ENCODE measurements at regions of chr19 and their contacts with region 1.

Region 1: GRCh38 chr19:39412100-39412866 is at the start of gene PLEKHG2:
- DNase-seq: peak; percentile 98
- ATAC-seq: peak; percentile 57
- H3K4me3 ChIP-seq: peak within 1 kb of the TSS; percentile 70 to 97 (median 95)
- H3K27ac ChIP-seq: peak within 1 kb of the TSS; percentile 81
- H3K4me1 ChIP-seq: peaks cover 61% of the 10 kb centered on the region
- H3K27me3 ChIP-seq: no peaks in the 10 kb centered on the region; a peak in 1 of 5 replicates
- CTCF ChIP-seq: peak; percentile 89
- EP300 ChIP-seq: peak in 1 of 2 experiments; percentile 35; a peak in 2 of 4 replicates
- POLR2A ChIP-seq: peak; percentile 48 to 63; a peak in 3 of 4 replicates
- RAD21 ChIP-seq: peak; percentile 83
- total RNA-seq, gene PLEKHG2: 3.6 and 5.2 TPM in 2 replicates

Region 2: GRCh38 chr19:39125554-39126311 is 286.6 kb before region 1 on chr19 and contains the start of gene PAK4:
- CTCF ChIA-PET with region 1: no interaction called
- POLR2A ChIA-PET with region 1: no interaction called
- in situ Hi-C with region 1: no loop called
- intact Hi-C with region 1: loop called (anchors 5 kb)
- DNase-seq: peak; percentile 94
- ATAC-seq: peak; percentile 85
- H3K4me3 ChIP-seq: peak within 1 kb of the TSS; percentile 80 to 87 (median 85)
- H3K27ac ChIP-seq: peak within 1 kb of the TSS; percentile 99
- H3K4me1 ChIP-seq: peaks cover 59% of the 10 kb centered on the region
- H3K27me3 ChIP-seq: no peaks in the 10 kb centered on the region
- CTCF ChIP-seq: no peak; the same call in 1 of the 2 replicates
- EP300 ChIP-seq: no peak
- POLR2A ChIP-seq: peak; percentile 53 to 81; a peak in 2 of 4 replicates
- RAD21 ChIP-seq: no peak
- total RNA-seq, gene PAK4: 9.5 and 11.6 TPM in 2 replicates

Region 3: GRCh38 chr19:39390755-39391592 is 21.3 kb before region 1 on chr19 and contains the starts of genes MED29 and PAF1:
- CTCF ChIA-PET with region 1: interaction called, 127 read pairs
- POLR2A ChIA-PET with region 1: interaction called, 43 read pairs
- in situ Hi-C with region 1: no loop called
- intact Hi-C with region 1: no loop called
- DNase-seq: peak; percentile 99
- ATAC-seq: peak; percentile 96
- H3K4me3 ChIP-seq: peak within 1 kb of the TSS; percentile 92 to 96 (median 95)
- H3K27ac ChIP-seq: peak within 1 kb of the TSS; percentile 86
- H3K4me1 ChIP-seq: peaks cover 22% of the 10 kb centered on the region
- H3K27me3 ChIP-seq: no peaks in the 10 kb centered on the region
- CTCF ChIP-seq: peak; percentile 57
- EP300 ChIP-seq: no peak
- POLR2A ChIP-seq: peak; percentile 98
- RAD21 ChIP-seq: 0 out of 2 replicates have a peak, but pooled peaks have one; percentile 16
- total RNA-seq, gene MED29: 14.0 and 18.1 TPM in 2 replicates
- total RNA-seq, gene PAF1: 30.2 and 31.0 TPM in 2 replicates

Region 4: GRCh38 chr19:39428283-39429112 is 16.2 kb after region 1 on chr19:
- CTCF ChIA-PET with region 1: no interaction called
- POLR2A ChIA-PET with region 1: interaction called, 31 read pairs
- in situ Hi-C with region 1: no loop called
- intact Hi-C with region 1: no loop called
- DNase-seq: peak; percentile 66
- ATAC-seq: peak; percentile 80
- H3K4me3 ChIP-seq: peak overlapping the region; percentile 33 to 72 (median 52)
- H3K27ac ChIP-seq: peak overlapping the region; percentile 62
- H3K4me1 ChIP-seq: peaks cover 52% of the 10 kb centered on the region
- H3K27me3 ChIP-seq: no peaks in the 10 kb centered on the region
- CTCF ChIP-seq: no peak
- EP300 ChIP-seq: no peak
- POLR2A ChIP-seq: no peak
- RAD21 ChIP-seq: no peak

Region 5: GRCh38 chr19:39532233-39533002 is 120.1 kb after region 1 on chr19 and contains the start of gene EID2B:
- CTCF ChIA-PET with region 1: no interaction called
- POLR2A ChIA-PET with region 1: no interaction called
- in situ Hi-C with region 1: no loop called
- intact Hi-C with region 1: loop called (anchors 10 kb)
- DNase-seq: peak; percentile 91
- ATAC-seq: peak; percentile 96
- H3K4me3 ChIP-seq: peak within 1 kb of the TSS; percentile 81 to 93 (median 89)
- H3K27ac ChIP-seq: peak within 1 kb of the TSS; percentile 45
- H3K4me1 ChIP-seq: peaks cover 15% of the 10 kb centered on the region
- H3K27me3 ChIP-seq: no peaks in the 10 kb centered on the region; a peak in 2 of 5 replicates
- CTCF ChIP-seq: peak; percentile 99
- EP300 ChIP-seq: no peak
- POLR2A ChIP-seq: peak; percentile 47 to 85; a peak in 3 of 4 replicates
- RAD21 ChIP-seq: peak; percentile 96
- total RNA-seq, gene EID2B: 3.6 and 3.7 TPM in 2 replicates

Measured in HepG2 (cell line).